ENCODE measurements at regions of chr19 and their contacts with region 1.

Region 1: DNA sequence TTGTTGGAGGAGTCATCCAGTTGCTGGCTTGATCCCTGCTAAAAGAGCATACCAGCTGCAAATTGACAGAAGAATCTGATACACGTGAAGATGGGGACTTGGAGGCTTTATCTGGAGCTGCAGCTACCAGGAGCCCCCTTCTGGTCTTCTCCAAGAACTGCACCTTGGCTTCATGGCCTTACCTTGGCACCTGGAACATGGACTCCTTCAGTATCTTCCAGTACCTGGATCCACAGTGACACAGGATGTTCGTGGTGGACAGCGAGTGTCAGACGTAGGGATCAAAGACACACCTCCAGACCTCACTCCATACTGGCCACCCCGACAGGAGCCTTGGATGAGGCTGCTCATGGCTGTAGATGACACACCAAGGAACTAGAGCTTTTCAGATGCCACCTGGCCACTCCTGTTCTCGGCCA is 9.9 kb upstream of the ACSBG2 start:
- DNase-seq: peak; percentile 66
- H3K4me3 ChIP-seq: no peak overlapping the region
- H3K27ac ChIP-seq: no peak overlapping the region
- H3K4me1 ChIP-seq: no peaks in the 10 kb centered on the region
- H3K27me3 ChIP-seq: no peaks in the 10 kb centered on the region
- CTCF ChIP-seq: peak; percentile 96
- EP300 ChIP-seq: no peak
- RAD21 ChIP-seq: peak; percentile 86

Region 2: GRCh38 chr19:6038634-6039405 is 86.8 kb before region 1 on chr19:
- CTCF ChIA-PET with region 1: interaction called, 21 read pairs
- POLR2A ChIA-PET with region 1: no interaction called
- DNase-seq: no peak
- H3K4me3 ChIP-seq: no peak overlapping the region
- H3K27ac ChIP-seq: no peak overlapping the region
- H3K4me1 ChIP-seq: no peaks in the 10 kb centered on the region
- H3K27me3 ChIP-seq: no peaks in the 10 kb centered on the region
- CTCF ChIP-seq: no peak
- EP300 ChIP-seq: no peak
- RAD21 ChIP-seq: no peak

Region 3: GRCh38 chr19:6056801-6057650 is 68.6 kb before region 1 on chr19:
- CTCF ChIA-PET with region 1: interaction called, 18 read pairs
- POLR2A ChIA-PET with region 1: no interaction called
- DNase-seq: no peak
- H3K4me3 ChIP-seq: no peak overlapping the region
- H3K27ac ChIP-seq: peak overlapping the region; percentile 68 to 97
- H3K4me1 ChIP-seq: peaks cover 32 to 34% of the 10 kb centered on the region in 2 experiments; a peak in 3 of 4 replicates
- H3K27me3 ChIP-seq: no peaks in the 10 kb centered on the region
- CTCF ChIP-seq: no peak
- EP300 ChIP-seq: peak in 1 of 2 experiments; percentile 45; a peak in 1 of 4 replicates
- RAD21 ChIP-seq: no peak

Region 4: DNA sequence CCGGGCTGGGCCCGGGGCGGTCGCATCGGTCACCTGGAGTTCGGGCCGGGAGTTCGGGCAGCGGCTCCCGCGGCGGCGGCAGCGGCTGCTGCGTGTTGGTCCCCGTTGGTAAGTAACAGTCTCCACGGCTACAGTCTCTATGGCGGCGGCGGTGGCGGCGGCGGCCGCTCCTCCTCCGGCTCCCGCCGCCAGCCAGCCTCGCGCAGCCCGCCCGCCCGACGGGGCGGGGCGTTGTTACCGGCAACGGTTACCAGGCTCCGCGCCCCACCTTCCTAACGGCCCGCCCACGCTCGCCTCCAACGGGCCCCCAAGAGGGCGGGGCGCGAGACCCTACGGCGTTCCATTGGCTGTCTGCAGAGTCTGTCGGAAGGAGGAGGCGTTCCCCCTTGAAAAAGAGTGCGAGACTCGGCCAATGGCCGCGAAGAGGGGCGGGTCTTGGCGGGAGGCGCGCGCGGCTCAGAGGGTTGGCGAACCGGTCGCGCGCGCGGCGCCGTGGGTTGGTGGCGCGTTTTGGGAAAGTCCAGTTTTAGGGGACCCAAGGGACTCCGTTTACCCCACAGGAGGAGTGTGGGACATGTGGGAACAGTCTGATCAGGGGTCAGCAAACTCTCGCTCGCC is 15.1 kb before region 1 on chr19 and contains the start of gene RFX2:
- CTCF ChIA-PET with region 1: interaction called, 44 read pairs
- POLR2A ChIA-PET with region 1: no interaction called
- DNase-seq: peak; percentile 98
- H3K4me3 ChIP-seq: peak within 1 kb of the TSS; percentile 64 to 73
- H3K27ac ChIP-seq: peak within 1 kb of the TSS in 1 of 2 experiments; percentile 91; a peak in 3 of 4 replicates
- H3K4me1 ChIP-seq: peaks cover 0 to 6% of the 10 kb centered on the region in 2 experiments; a peak in 1 of 4 replicates
- H3K27me3 ChIP-seq: no peaks in the 10 kb centered on the region
- CTCF ChIP-seq: no peak
- EP300 ChIP-seq: peak in 1 of 2 experiments; percentile 15; a peak in 1 of 4 replicates
- RAD21 ChIP-seq: no peak
- polyA plus RNA-seq, gene RFX2: 10.0 and 12.6 TPM in 2 replicates